Sigmoid colon (tissue), 7 donors: ENCODE measurements at regions of chr3 and their contacts with region 1.

Region 1: GRCh38 chr3:160449636-160450598 is at the start of gene TRIM59:
- DNase-seq: peak; percentile 95
- H3K4me3 ChIP-seq: peak within 1 kb of the TSS; percentile 46 to 77 (median 56)
- H3K27ac ChIP-seq: peak within 1 kb of the TSS; percentile 73 to 88 (median 84)
- H3K4me1 ChIP-seq: peaks cover 0 to 26% (median 18%) of the 10 kb centered on the region in 4 donors
- H3K27me3 ChIP-seq: no peaks in the 10 kb centered on the region
- CTCF ChIP-seq: no peak
- EP300 ChIP-seq: no peak
- POLR2A ChIP-seq: peak in 1 of 2 donors; percentile 25
- total RNA-seq, gene TRIM59: 3.4 to 6.1 (median 5.3) TPM

Region 2: DNA sequence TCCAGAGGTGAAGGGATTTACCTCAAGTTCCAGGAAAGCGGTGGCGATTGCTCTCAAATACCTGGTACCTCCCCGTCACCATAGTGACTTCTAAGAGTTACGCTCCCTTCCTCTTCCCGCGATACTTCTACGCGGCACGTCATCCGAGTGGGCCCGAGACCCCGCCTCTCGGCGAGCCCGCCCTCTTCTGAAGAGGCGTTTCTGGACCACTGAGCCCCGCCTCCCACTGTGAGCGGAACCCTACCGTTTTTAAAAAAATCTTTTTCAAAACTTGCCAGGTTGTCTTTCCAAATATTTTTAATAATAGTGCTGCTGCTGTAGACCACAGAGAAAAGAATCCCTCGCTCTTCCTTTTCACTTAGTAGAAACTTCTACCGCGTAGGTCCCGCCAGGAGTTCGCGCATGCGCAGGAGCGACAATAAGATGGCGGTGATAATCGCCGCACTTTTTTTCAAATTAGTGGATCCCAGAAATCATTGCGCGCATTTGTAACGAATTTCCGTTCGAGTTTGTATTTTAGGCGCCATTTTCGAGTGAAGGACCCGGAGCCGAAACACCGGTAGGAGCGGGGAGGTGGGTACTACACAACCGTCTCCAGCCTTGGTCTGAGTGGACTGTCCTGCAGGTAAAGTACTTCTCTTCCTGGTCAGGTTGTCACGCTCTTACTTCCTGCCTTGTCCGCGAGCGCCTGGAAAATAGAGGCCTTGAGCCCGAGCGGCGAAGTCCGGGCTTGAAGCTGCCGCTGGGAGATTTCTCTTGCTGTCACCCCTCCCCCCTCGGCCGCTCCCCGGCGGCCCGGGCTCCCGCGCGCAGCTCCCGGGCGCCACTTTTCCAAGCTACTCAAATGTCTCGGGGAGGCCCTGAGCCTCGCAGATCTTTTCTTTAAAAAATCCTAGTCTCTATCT is 50.5 kb before region 1 on chr3 and contains the starts of genes IFT80 and SMC4:
- intact Hi-C with region 1: loop called (anchors 5 kb)
- DNase-seq: peak; percentile 98
- H3K4me3 ChIP-seq: peak within 1 kb of the TSS; percentile 61 to 76 (median 68)
- H3K27ac ChIP-seq: peak within 1 kb of the TSS; percentile 84 to 90 (median 86)
- H3K4me1 ChIP-seq: peaks cover 0 to 26% (median 19%) of the 10 kb centered on the region in 4 donors
- H3K27me3 ChIP-seq: peaks cover 0 to 36% (median 15%) of the 10 kb centered on the region in 3 donors
- CTCF ChIP-seq: peak in 1 of 4 experiments; percentile 14
- EP300 ChIP-seq: no peak
- POLR2A ChIP-seq: no peak
- total RNA-seq, gene IFT80: 15.0 to 22.8 (median 17.2) TPM
- total RNA-seq, gene SMC4: 25.1 to 44.6 (median 31.3) TPM

Region 3: GRCh38 chr3:160565442-160566403 is 115.8 kb after region 1 on chr3 and contains the start of gene KPNA4:
- intact Hi-C with region 1: loop called (anchors 5 kb)
- DNase-seq: peak; percentile 99
- H3K4me3 ChIP-seq: peak within 1 kb of the TSS; percentile 86 to 93 (median 88)
- H3K27ac ChIP-seq: peak within 1 kb of the TSS; percentile 98 to 99 (median 99)
- H3K4me1 ChIP-seq: peaks cover 0 to 50% (median 31%) of the 10 kb centered on the region in 4 donors
- H3K27me3 ChIP-seq: no peaks in the 10 kb centered on the region
- CTCF ChIP-seq: no peak
- EP300 ChIP-seq: no peak
- POLR2A ChIP-seq: peak; percentile 53 to 70
- total RNA-seq, gene KPNA4: 45.4 to 52.8 (median 49.2) TPM